Posterior vena cava (tissue), 2 donors: ENCODE measurements at regions of chr7 and their contacts with region 1.

Region 1: DNA sequence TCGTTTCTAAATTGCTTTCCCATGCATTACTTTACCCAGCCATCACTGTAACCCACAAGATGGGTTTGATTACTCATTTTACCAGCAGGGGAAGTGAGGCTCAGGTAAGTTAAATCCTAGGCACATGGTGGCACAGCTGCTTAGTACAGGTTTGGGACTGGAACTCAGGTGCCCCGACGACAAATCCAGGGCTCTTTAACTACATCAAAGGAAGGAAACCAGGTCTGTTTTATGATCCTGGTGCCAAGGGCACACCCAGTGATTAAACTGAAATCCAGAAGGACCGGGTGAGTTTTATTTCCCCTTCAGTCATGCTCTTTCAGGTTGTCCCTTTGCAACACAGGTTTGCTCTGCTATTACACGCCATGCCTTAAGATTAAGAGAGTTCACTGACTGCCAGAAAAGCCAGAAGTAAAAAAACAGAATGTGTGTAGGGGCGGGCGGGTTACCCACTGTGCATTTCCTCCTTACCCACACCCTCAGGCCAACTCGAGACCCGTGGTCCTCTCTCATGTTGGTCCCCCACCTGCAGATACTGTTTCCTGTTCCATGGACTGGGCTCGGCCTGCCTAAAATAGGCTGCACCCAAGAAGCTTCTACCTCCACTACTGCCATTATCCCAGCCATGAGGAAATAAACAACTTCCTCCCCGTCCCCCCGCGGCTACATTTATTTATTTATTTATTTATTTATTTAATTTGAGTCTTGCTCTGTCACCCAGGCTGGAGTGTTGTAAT is 55.2 kb upstream of the KDM7A start:
- DNase-seq: peak; percentile 64

Region 2: DNA sequence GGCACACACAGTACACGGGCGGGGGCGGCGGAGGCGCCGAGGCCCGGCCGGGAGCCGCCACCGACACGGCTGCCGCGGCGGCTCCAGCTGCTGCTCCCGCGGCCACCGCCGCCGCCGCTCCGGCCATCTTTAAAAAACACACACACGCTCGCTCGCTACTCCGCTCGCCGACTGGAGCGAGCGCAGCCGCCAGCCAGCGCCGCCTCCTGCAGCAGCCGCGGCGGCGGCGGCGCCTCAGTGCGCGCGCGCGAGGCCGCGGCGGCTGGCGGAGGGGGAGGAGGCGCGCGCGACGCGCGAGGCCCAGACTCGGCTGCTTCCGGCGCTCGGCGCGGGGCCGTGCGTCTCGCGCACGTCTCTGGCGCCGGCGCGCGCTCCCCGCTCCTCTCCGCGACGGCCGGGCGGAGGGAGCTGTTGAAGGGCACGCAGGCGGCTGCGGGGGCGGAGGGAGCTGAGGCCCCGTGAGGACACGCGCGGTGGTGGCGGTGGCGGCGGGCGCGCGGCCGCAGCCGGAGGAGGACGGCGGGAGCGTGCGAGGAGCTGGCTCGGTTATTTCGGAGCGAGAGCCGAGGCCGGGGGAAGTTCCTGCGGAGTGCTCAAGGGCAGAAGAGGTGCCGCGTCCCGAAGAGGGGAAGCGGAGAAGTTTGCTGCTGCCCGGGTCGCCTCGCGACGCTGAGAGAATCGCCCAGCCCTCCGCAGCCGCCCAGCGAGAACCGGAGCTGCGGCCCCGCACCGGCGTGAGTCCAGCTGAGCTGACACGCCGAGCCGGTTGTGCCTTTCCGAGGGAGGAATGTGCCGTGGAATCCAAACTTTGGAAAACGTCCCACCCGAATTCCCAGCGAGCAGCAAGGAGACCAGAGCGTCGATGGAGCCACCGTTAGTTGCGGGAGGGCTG is 54.9 kb before region 1 on chr7 and contains the start of gene KDM7A:
- intact Hi-C with region 1: no loop called
- DNase-seq: peak; percentile 98
- total RNA-seq, gene KDM7A: 15.4 to 23.1 TPM

Region 3: GRCh38 chr7:140281960-140282359 is 50.0 kb after region 1 on chr7:
- intact Hi-C with region 1: loop called in 1 of 2 experiments (anchors 2 kb)
- DNase-seq: no peak